Activated CD4-positive, alpha-beta memory T cell treated with anti-CD3 and anti-CD28 coated beads for 36 hours (primary cell): ENCODE measurements at regions of chr6 and their contacts with region 1.

Region 1: GRCh38 chr6:2127484-2127911 is 117.9 kb downstream of the GMDS start:
- DNase-seq: peak; percentile 73
- H3K4me3 Mint-ChIP-seq: no peak overlapping the region
- H3K27ac Mint-ChIP-seq: peak overlapping the region; percentile 33
- H3K4me1 Mint-ChIP-seq: peaks cover 33% of the 10 kb centered on the region
- H3K27me3 Mint-ChIP-seq: no peaks in the 10 kb centered on the region

Region 2: DNA sequence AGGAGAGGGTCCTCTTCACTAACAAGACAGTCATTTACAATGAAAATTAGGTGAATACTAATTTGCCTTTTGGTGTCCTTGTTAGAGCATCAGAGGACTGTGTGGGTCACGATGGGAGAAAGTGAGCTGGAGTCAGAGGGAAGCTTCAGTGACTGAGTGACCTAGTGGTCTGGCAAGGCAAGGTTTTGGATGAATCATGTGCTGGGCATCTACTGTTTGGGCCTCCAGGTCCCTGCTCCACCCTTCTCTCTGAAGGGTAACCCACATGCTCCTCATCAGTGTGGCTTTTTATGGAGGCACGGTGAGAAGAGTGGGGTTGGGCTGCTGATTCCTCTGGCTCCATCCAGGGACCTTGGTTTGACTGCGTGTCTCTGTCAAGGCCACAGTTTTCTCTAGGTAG is 1374.0 kb before region 1 on chr6:
- CTCF ChIA-PET with region 1: no interaction called
- POLR2A ChIA-PET with region 1: no interaction called
- intact Hi-C with region 1: no loop called
- DNase-seq: no peak
- H3K4me3 Mint-ChIP-seq: no peak overlapping the region
- H3K27ac Mint-ChIP-seq: no peak overlapping the region
- H3K4me1 Mint-ChIP-seq: no peaks in the 10 kb centered on the region
- H3K27me3 Mint-ChIP-seq: no peaks in the 10 kb centered on the region

Region 3: DNA sequence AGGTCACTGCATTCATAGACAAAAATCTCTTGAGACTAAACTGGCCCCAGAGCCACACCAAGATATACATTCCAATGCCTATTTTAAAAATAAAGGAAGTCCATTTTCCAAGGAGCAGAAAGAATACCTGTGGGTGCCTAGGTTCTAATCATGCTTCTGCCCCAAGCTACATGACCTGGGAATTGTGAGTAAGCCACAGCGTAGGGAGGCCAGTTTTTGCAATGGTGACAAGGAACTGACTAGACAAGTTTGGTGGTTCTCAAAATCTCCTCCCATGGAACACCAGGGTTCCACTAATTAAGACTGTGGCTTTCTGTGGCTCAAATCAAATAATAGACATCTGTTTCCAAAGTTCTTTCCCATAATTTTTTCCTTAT is 34.6 kb after region 1 on chr6:
- CTCF ChIA-PET with region 1: no interaction called
- POLR2A ChIA-PET with region 1: no interaction called
- intact Hi-C with region 1: loop called (anchors 5 kb)
- DNase-seq: no peak
- H3K4me3 Mint-ChIP-seq: no peak overlapping the region
- H3K27ac Mint-ChIP-seq: no peak overlapping the region
- H3K4me1 Mint-ChIP-seq: peaks cover 37% of the 10 kb centered on the region
- H3K27me3 Mint-ChIP-seq: no peaks in the 10 kb centered on the region

Region 4: GRCh38 chr6:2196079-2196679 is 68.7 kb after region 1 on chr6:
- CTCF ChIA-PET with region 1: no interaction called
- POLR2A ChIA-PET with region 1: no interaction called
- intact Hi-C with region 1: no loop called
- DNase-seq: no peak
- H3K4me3 Mint-ChIP-seq: no peak overlapping the region
- H3K27ac Mint-ChIP-seq: no peak overlapping the region
- H3K4me1 Mint-ChIP-seq: no peaks in the 10 kb centered on the region
- H3K27me3 Mint-ChIP-seq: no peaks in the 10 kb centered on the region